ENCODE measurements at regions of chr4 and their contacts with region 1.

Region 1: DNA sequence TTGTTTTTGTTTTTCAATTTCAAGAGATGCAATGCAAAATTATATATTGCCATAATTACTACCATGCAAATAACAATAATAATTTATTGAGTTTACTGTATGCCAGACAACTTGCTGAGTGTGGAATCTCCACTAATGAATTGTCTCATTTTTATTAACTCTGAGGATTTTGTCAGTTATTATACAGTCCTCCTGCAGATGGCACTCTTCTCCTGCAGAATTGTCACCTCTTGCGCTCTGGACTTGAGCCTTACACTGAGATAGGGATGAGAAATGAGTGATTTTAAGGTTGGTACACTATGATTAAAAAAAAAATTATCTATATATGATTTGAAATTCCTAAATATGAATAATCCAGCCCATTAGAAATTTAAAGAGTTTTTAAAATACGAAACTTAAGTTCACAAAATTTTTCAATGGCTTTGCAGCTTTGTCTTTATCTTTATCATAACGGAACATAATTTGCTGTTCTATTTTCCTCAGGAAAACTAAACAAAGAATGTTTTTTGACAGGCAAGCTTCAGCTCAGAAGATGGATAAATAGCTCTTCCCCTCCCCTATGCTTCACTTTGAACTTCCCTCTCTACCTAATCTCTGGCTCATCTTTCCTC is 12.7 kb upstream of the PAQR3 start:
- DNase-seq: peak in 3 of 5 donors; percentile 26 to 52 (median 34)
- H3K4me3 ChIP-seq: no peak overlapping the region
- H3K4me3 Mint-ChIP-seq: no peak overlapping the region
- H3K27ac ChIP-seq: no peak overlapping the region
- H3K27ac Mint-ChIP-seq: no peak overlapping the region
- H3K4me1 ChIP-seq: no peaks in the 10 kb centered on the region
- H3K4me1 Mint-ChIP-seq: peaks cover 0 to 4% (median 0%) of the 10 kb centered on the region in 3 donors
- H3K27me3 ChIP-seq: peaks cover 10% of the 10 kb centered on the region
- H3K27me3 Mint-ChIP-seq: peaks cover 11 to 43% of the 10 kb centered on the region in 2 donors

Region 2: GRCh38 chr4:78902298-78902697 is 49.7 kb before region 1 on chr4:
- CTCF ChIA-PET with region 1: no interaction called
- POLR2A ChIA-PET with region 1: no interaction called
- DNase-seq: no peak
- H3K4me3 ChIP-seq: no peak overlapping the region
- H3K4me3 Mint-ChIP-seq: no peak overlapping the region
- H3K27ac ChIP-seq: no peak overlapping the region
- H3K27ac Mint-ChIP-seq: no peak overlapping the region
- H3K4me1 ChIP-seq: no peaks in the 10 kb centered on the region
- H3K4me1 Mint-ChIP-seq: no peaks in the 10 kb centered on the region
- H3K27me3 ChIP-seq: no peaks in the 10 kb centered on the region
- H3K27me3 Mint-ChIP-seq: no peaks in the 10 kb centered on the region

Region 3: DNA sequence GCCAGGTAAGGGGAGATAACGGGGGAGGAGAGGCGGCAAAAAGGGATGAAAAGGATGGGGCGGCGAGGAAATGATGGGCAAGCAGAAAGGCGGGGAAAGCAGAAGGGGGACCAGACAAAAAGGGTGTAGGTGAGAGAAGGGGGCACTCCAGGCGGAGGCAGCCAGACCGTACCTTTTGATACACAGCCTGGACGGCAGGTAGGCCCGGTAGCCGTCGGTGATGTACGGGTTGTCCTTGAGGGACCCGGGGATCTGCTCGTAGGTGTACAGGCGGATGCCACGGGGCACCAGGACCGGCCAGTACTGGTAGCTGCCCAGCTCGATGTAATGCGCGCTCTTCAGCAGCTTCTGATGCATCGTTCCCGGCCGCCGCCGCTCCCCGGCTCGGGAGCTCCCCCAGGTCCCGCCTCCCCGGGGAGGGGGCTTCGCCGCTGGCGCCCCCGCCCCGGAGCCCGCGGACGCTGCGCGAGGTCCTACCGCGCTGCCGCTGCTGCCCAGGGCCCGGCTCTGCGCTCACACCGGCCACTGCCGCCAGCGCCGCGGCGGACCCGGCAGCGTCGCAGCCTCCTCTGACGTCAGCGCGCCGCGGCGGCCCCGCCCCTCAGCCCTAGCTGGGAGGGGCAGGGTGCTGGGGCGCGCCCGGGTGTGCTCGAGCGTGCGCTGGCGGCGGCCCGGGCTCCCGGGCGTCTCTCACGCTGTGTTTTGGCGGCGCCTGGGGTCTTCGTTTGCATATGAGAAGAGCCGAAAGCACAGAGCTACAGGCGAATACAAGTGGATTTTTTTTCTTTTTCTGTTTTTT is 12.9 kb before region 1 on chr4 and contains the start of gene PAQR3:
- CTCF ChIA-PET with region 1: interaction called, 22 read pairs
- POLR2A ChIA-PET with region 1: no interaction called
- DNase-seq: peak; percentile 77 to 88 (median 83)
- H3K4me3 ChIP-seq: peak within 1 kb of the TSS; percentile 85
- H3K4me3 Mint-ChIP-seq: peak within 1 kb of the TSS; percentile 88 to 100 (median 94)
- H3K27ac ChIP-seq: peak within 1 kb of the TSS; percentile 79
- H3K27ac Mint-ChIP-seq: peak within 1 kb of the TSS; percentile 64 to 99 (median 94)
- H3K4me1 ChIP-seq: peaks cover 30% of the 10 kb centered on the region
- H3K4me1 Mint-ChIP-seq: peaks cover 32 to 54% (median 49%) of the 10 kb centered on the region in 3 donors
- H3K27me3 ChIP-seq: no peaks in the 10 kb centered on the region
- H3K27me3 Mint-ChIP-seq: peaks cover 1 to 12% of the 10 kb centered on the region in 2 donors
- total RNA-seq, gene PAQR3: 11.1 to 11.8 TPM

Region 4: GRCh38 chr4:78962597-78963115 is 10.7 kb after region 1 on chr4:
- CTCF ChIA-PET with region 1: no interaction called
- POLR2A ChIA-PET with region 1: no interaction called
- DNase-seq: no peak
- H3K4me3 ChIP-seq: no peak overlapping the region
- H3K4me3 Mint-ChIP-seq: no peak overlapping the region
- H3K27ac ChIP-seq: no peak overlapping the region
- H3K27ac Mint-ChIP-seq: no peak overlapping the region
- H3K4me1 ChIP-seq: no peaks in the 10 kb centered on the region
- H3K4me1 Mint-ChIP-seq: no peaks in the 10 kb centered on the region
- H3K27me3 ChIP-seq: no peaks in the 10 kb centered on the region
- H3K27me3 Mint-ChIP-seq: peaks cover 3 to 12% of the 10 kb centered on the region in 2 donors

Region 5: DNA sequence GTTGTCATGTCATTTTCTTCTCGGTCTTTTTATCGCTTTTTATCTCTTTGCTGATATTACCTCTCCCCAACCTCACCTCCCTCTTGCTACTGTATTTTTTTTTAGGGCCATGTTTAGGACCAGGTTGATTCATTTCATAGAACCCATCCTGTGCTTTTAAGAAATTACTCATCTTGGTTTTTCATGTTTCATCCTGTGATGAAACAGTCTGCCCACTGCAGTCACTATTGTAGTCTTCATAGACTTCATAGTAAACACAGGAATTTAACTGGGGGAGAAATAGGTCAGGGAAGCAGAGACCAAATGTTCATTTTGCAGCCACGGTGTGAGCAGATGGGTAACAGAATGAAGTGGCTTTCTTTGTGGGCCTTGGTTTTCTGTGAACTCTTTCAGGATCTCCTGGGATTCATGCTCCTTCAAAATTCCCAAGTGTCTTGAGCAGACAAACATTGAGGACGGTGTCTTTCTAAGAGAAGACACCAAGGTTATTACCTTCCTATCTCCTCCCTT is 212.1 kb after region 1 on chr4:
- CTCF ChIA-PET with region 1: no interaction called
- POLR2A ChIA-PET with region 1: no interaction called
- DNase-seq: no peak
- H3K4me3 ChIP-seq: no peak overlapping the region
- H3K4me3 Mint-ChIP-seq: no peak overlapping the region
- H3K27ac ChIP-seq: no peak overlapping the region
- H3K27ac Mint-ChIP-seq: no peak overlapping the region
- H3K4me1 ChIP-seq: no peaks in the 10 kb centered on the region
- H3K4me1 Mint-ChIP-seq: no peaks in the 10 kb centered on the region
- H3K27me3 ChIP-seq: no peaks in the 10 kb centered on the region
- H3K27me3 Mint-ChIP-seq: no peaks in the 10 kb centered on the region